OCI-LY7 (cell line): ENCODE measurements at regions of chr10 and their contacts with region 1.

Region 1: DNA sequence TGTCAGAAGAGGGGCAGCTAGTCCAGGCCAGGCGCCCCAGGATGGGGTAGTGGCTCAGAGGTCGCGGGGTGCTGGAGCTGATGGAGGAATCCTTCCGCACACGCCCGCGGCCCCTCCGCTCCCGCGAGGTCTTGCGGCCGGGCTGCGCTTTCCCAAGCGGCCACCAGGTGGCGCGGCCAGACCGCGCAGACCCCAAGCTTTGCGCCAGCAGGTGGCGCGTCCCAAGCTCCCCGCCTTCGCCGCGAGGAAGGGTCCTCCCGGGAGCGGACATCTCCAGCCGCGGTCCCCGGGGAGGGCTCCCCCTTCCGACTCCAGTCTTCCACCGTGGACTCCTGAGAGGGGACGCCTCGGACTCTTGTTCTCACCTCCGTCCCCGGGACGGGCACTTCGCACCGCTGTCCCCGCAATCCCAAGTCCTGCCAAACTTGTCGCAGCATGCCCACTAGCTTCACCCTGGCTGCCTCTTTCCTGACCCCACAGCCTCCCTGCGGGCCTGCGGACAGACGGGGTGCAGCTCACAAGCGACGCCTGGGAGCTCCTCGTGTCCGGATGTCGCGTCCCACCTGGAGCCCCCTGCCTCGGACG is 19.4 kb downstream of the KCNK18 start:
- DNase-seq: peak; percentile 69
- H3K4me3 ChIP-seq: no peak overlapping the region
- H3K27ac ChIP-seq: no peak overlapping the region
- H3K4me1 ChIP-seq: no peaks in the 10 kb centered on the region
- CTCF ChIP-seq: peak; percentile 93

Region 2: DNA sequence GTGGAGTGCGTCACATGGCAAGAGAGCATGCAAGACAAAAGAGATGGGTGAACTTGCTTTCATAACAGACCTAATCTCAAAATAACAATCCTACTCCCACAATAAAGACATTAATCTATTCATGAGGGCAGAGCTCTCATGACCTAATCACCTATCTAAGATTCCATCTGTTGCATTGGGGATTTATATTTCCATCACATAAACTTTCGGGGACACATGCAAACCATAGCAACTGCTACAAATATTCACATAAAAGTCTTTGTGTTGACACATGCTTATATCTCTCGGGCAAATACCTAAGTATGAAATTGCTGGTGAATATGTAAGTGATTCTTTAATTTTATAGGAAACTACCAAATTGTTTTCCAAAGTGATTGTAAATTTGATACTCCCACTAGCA is 641.9 kb before region 1 on chr10:
- CTCF ChIA-PET with region 1: no interaction called
- POLR2A ChIA-PET with region 1: no interaction called
- intact Hi-C with region 1: no loop called
- DNase-seq: no peak
- H3K4me3 ChIP-seq: no peak overlapping the region
- H3K27ac ChIP-seq: no peak overlapping the region
- H3K4me1 ChIP-seq: no peaks in the 10 kb centered on the region
- CTCF ChIP-seq: no peak

Region 3: DNA sequence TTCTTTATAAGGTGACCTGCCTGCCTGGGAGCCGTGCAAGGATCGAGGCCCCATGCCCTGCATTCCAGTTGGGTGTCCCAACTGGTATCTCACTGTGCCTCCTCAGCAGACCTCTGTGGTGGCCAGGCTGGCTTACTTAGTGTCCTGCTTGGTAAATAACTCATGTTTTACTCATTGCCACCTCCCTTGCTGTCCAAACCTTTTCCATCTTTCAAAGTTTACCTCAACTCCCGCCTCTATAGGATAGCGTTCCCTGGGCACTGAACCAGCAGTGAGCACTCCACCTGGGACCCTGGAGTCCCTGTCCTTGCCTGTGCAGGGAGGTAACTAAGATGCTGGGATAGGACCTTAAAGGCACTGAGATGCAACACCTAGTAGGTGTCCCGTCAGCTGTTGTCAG is 57.8 kb after region 1 on chr10:
- CTCF ChIA-PET with region 1: no interaction called
- POLR2A ChIA-PET with region 1: no interaction called
- intact Hi-C with region 1: no loop called
- DNase-seq: no peak
- H3K4me3 ChIP-seq: no peak overlapping the region
- H3K27ac ChIP-seq: no peak overlapping the region
- H3K4me1 ChIP-seq: no peaks in the 10 kb centered on the region
- CTCF ChIP-seq: no peak

Region 4: GRCh38 chr10:117320050-117320665 is 103.5 kb after region 1 on chr10:
- CTCF ChIA-PET with region 1: no interaction called
- POLR2A ChIA-PET with region 1: no interaction called
- intact Hi-C with region 1: loop called (anchors 2 kb)
- DNase-seq: peak; percentile 27
- H3K4me3 ChIP-seq: no peak overlapping the region
- H3K27ac ChIP-seq: no peak overlapping the region
- H3K4me1 ChIP-seq: no peaks in the 10 kb centered on the region
- CTCF ChIP-seq: peak; percentile 86

Region 5: DNA sequence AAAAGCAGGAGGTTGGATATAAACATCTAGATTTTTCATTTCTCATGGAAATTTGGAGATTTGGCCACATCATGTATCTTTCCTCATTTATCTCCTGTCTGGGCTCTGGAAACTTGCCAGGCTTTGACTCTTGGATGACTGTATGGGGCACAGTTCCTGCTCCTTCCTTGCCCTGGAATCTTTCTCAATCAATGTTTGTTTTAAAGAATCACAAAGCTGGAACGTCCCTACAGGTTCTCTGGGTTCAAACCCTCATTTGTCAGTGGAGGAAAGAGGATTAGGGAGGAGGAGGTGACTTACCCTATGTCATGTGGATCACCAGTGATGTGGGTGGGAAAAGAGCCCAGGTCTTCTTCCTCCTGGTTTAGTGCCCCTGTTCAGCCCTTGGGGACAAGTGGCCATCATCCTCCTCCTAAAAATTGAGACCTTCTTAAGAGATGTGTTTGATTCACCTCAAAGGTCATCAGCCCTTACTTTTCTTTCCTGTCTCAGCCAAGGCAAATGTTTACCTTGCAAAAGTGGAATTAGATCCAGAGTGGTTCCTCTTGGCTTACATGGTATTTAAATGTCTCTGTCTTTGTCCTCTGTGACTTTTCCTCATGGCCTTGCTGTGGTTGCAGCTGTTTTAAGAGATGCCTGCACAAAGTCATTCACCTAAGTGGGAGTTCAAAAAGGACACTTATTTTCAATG is 197.4 kb after region 1 on chr10:
- CTCF ChIA-PET with region 1: no interaction called
- POLR2A ChIA-PET with region 1: interaction called, 3 read pairs
- intact Hi-C with region 1: loop called (anchors 10 kb)
- DNase-seq: no peak
- H3K4me3 ChIP-seq: no peak overlapping the region
- H3K27ac ChIP-seq: no peak overlapping the region
- H3K4me1 ChIP-seq: no peaks in the 10 kb centered on the region
- CTCF ChIP-seq: no peak